GM12878 (cell line): ENCODE measurements at regions of chr2 and their contacts with region 1.

Region 1: GRCh38 chr2:37414470-37414949 is 70.1 kb downstream of the QPCT start:
- DNase-seq: peak; percentile 53
- ATAC-seq: peak; percentile 94
- H3K4me3 ChIP-seq: no peak overlapping the region
- H3K27ac ChIP-seq: no peak overlapping the region
- H3K4me1 ChIP-seq: peaks cover 4% of the 10 kb centered on the region; the same call in 1 of the 2 replicates
- H3K27me3 ChIP-seq: no peaks in the 10 kb centered on the region
- CTCF ChIP-seq: peak; percentile 88 to 99 (median 98); a peak in 5 of 6 replicates
- EP300 ChIP-seq: no peak
- POLR2A ChIP-seq: no peak
- RAD21 ChIP-seq: peak; percentile 100

Region 2: GRCh38 chr2:37472959-37473358 is 58.4 kb after region 1 on chr2:
- CTCF ChIA-PET with region 1: no interaction called
- POLR2A ChIA-PET with region 1: no interaction called
- RAD21 ChIA-PET with region 1: no interaction called
- SMC1A ChIA-PET with region 1: no interaction called
- in situ Hi-C with region 1: no loop called
- intact Hi-C with region 1: no loop called
- DNase-seq: no peak
- ATAC-seq: no peak
- H3K4me3 ChIP-seq: no peak overlapping the region
- H3K27ac ChIP-seq: no peak overlapping the region
- H3K4me1 ChIP-seq: no peaks in the 10 kb centered on the region
- H3K27me3 ChIP-seq: no peaks in the 10 kb centered on the region
- CTCF ChIP-seq: no peak
- EP300 ChIP-seq: no peak
- POLR2A ChIP-seq: no peak
- RAD21 ChIP-seq: no peak

Region 3: GRCh38 chr2:37529830-37530415 is 115.4 kb after region 1 on chr2:
- CTCF ChIA-PET with region 1: no interaction called
- POLR2A ChIA-PET with region 1: no interaction called
- RAD21 ChIA-PET with region 1: interaction called, 7 read pairs
- SMC1A ChIA-PET with region 1: interaction called, 6 read pairs
- in situ Hi-C with region 1: no loop called
- intact Hi-C with region 1: loop called (anchors 5 kb)
- DNase-seq: no peak
- ATAC-seq: peak; percentile 59
- H3K4me3 ChIP-seq: no peak overlapping the region
- H3K27ac ChIP-seq: no peak overlapping the region
- H3K4me1 ChIP-seq: no peaks in the 10 kb centered on the region
- H3K27me3 ChIP-seq: no peaks in the 10 kb centered on the region
- CTCF ChIP-seq: no peak
- EP300 ChIP-seq: no peak
- POLR2A ChIP-seq: no peak
- RAD21 ChIP-seq: no peak

Region 4: DNA sequence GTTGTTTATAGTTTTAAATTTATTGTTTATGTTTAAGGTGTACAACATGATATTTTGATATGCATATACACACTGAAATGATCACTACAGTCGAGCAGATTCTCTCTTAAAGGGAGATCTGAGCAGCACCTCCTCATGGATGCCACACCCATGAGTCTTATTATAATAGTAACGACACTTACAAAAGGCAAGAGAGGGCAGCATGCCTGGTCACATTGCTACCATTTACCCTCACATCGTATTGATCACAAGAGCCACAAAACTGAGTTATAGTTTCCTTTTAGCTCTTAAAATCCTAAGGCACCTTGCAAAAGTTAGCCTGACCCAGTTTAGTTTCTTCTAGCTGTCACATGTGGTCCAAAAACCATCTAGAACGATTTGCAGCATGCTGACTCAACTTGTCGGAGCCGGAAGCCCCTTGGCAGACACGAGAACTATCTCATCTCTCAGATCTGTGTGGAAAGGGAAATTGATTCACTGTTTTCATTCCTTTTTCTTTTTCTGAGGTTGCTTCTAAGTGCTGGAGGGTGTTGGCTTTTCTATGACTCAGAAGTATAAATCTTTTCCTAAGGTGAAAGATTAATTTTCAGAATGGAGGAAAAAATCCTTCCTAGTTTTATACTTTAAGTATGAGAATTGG is 171.6 kb after region 1 on chr2:
- CTCF ChIA-PET with region 1: interaction called, 9 read pairs
- POLR2A ChIA-PET with region 1: interaction called, 5 read pairs
- RAD21 ChIA-PET with region 1: interaction called, 8 read pairs
- SMC1A ChIA-PET with region 1: interaction called, 10 read pairs
- in situ Hi-C with region 1: no loop called
- intact Hi-C with region 1: no loop called
- DNase-seq: peak; percentile 68
- ATAC-seq: peak; percentile 58
- H3K4me3 ChIP-seq: no peak overlapping the region
- H3K27ac ChIP-seq: peak overlapping the region; percentile 61
- H3K4me1 ChIP-seq: peaks cover 42% of the 10 kb centered on the region
- H3K27me3 ChIP-seq: no peaks in the 10 kb centered on the region
- CTCF ChIP-seq: no peak
- EP300 ChIP-seq: no peak
- POLR2A ChIP-seq: no peak
- RAD21 ChIP-seq: no peak

Region 5: GRCh38 chr2:37653805-37654378 is 239.4 kb after region 1 on chr2:
- CTCF ChIA-PET with region 1: interaction called, 9 read pairs
- POLR2A ChIA-PET with region 1: no interaction called
- RAD21 ChIA-PET with region 1: interaction called, 12 read pairs
- SMC1A ChIA-PET with region 1: interaction called, 16 read pairs
- in situ Hi-C with region 1: no loop called
- intact Hi-C with region 1: no loop called
- DNase-seq: peak; percentile 84
- ATAC-seq: peak; percentile 78
- H3K4me3 ChIP-seq: peak overlapping the region; percentile 75
- H3K27ac ChIP-seq: peak overlapping the region; percentile 99
- H3K4me1 ChIP-seq: peaks cover 69% of the 10 kb centered on the region
- H3K27me3 ChIP-seq: no peaks in the 10 kb centered on the region
- CTCF ChIP-seq: no peak
- EP300 ChIP-seq: peak; percentile 91 to 94
- POLR2A ChIP-seq: peak; percentile 93
- RAD21 ChIP-seq: peak; percentile 4; the same call in 1 of the 2 replicates

Region 6: DNA sequence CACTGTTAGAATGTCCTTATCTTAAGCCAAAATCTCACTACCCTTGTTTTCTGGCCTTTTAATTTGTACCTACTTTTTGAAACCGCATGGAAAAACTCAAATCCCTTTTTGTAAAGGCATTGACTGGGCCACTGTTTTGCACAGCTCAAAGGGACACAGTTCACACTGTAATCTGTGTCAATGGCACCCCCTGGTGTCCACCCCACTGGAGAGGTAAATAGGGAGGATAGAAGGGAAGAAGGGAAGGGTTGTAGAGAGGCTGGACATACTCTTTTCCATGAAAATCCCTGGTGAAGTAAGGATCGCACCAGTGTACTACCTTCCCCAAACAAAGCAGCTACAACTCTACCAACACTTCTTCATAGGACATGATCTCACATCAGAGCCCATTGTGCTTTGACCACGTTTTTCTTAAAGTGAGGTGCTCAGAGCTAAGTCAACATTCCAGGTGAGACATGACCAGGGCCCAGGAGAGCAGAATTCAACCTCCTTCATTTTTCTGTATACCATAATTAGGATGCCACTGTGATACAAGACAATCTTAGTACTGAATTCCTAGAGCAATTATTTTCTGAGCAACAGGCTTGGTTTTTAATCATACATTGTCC is 418.2 kb after region 1 on chr2:
- CTCF ChIA-PET with region 1: interaction called, 330 read pairs
- POLR2A ChIA-PET with region 1: interaction called, 4 read pairs
- RAD21 ChIA-PET with region 1: interaction called, 291 read pairs
- SMC1A ChIA-PET with region 1: interaction called, 351 read pairs
- in situ Hi-C with region 1: loop called (anchors 5 kb)
- intact Hi-C with region 1: loop called (anchors 1 kb)
- DNase-seq: peak; percentile 68
- ATAC-seq: peak; percentile 92
- H3K4me3 ChIP-seq: no peak overlapping the region
- H3K27ac ChIP-seq: peak overlapping the region; percentile 50
- H3K4me1 ChIP-seq: peaks cover 4% of the 10 kb centered on the region
- H3K27me3 ChIP-seq: no peaks in the 10 kb centered on the region
- CTCF ChIP-seq: peak; percentile 74 to 88 (median 84)
- EP300 ChIP-seq: no peak
- POLR2A ChIP-seq: no peak
- RAD21 ChIP-seq: peak; percentile 100

Region 7: GRCh38 chr2:38274286-38275276 is 860.1 kb after region 1 on chr2:
- CTCF ChIA-PET with region 1: interaction called, 5 read pairs
- POLR2A ChIA-PET with region 1: no interaction called
- RAD21 ChIA-PET with region 1: interaction called, 13 read pairs
- SMC1A ChIA-PET with region 1: no interaction called
- in situ Hi-C with region 1: no loop called
- intact Hi-C with region 1: no loop called
- DNase-seq: peak; percentile 65
- ATAC-seq: peak; percentile 89
- H3K4me3 ChIP-seq: no peak overlapping the region
- H3K27ac ChIP-seq: no peak overlapping the region
- H3K4me1 ChIP-seq: no peaks in the 10 kb centered on the region
- H3K27me3 ChIP-seq: no peaks in the 10 kb centered on the region
- CTCF ChIP-seq: peak; percentile 53 to 79 (median 63); a peak in 5 of 6 replicates
- EP300 ChIP-seq: no peak
- POLR2A ChIP-seq: no peak
- RAD21 ChIP-seq: peak; percentile 93